Pancreas (tissue), 10 donors: ENCODE measurements at regions of chr14 and their contacts with region 1.

Region 1: DNA sequence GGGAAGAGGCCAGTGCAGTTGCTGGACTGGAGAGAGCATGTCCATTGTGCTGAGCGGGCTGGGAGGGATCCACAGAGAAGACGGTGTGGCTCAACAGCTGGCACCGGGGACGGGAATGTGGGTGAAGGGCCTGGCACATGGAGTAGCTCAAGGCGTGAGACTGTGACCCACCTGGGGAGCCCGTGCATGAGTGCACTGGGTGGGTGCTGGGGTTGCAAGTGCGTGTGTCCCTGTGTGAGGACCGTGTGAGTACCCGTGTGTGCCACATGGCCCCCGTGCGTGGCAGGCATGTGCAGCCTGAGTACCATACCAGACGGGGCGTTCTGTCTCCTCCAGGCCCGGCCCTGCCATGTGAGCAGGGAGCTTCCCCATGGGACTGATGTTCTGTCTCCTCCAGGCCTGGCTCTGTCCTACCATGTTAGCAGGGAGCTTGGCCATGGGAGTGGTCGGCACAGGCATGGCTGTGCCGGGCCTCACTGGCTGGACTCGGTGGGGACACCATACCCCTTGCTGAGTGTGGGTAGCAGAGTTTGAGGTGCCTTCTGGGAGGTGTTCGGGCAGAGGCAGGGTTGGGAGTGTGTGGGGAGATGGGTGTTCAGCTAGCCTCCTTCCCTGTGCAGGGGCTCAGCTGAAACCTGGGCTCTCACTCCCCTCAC is 234.4 kb downstream of the TMEM121 start:
- DNase-seq: peak in 1 of 6 donors; percentile 39
- ATAC-seq: no peak
- H3K4me3 ChIP-seq: no peak overlapping the region
- H3K27ac ChIP-seq: no peak overlapping the region
- H3K4me1 ChIP-seq: no peaks in the 10 kb centered on the region
- H3K27me3 ChIP-seq: no peaks in the 10 kb centered on the region
- CTCF ChIP-seq: no peak

Region 2: GRCh38 chr14:105617201-105617777 is 143.5 kb before region 1 on chr14:
- intact Hi-C with region 1: loop called in 2 of 3 experiments (anchors 2 to 5 kb)
- DNase-seq: peak in 1 of 6 donors; percentile 42
- ATAC-seq: peak in 1 of 4 donors; percentile 11
- H3K4me3 ChIP-seq: no peak overlapping the region
- H3K27ac ChIP-seq: no peak overlapping the region
- H3K4me1 ChIP-seq: no peaks in the 10 kb centered on the region
- H3K27me3 ChIP-seq: no peaks in the 10 kb centered on the region
- CTCF ChIP-seq: no peak

Region 3: DNA sequence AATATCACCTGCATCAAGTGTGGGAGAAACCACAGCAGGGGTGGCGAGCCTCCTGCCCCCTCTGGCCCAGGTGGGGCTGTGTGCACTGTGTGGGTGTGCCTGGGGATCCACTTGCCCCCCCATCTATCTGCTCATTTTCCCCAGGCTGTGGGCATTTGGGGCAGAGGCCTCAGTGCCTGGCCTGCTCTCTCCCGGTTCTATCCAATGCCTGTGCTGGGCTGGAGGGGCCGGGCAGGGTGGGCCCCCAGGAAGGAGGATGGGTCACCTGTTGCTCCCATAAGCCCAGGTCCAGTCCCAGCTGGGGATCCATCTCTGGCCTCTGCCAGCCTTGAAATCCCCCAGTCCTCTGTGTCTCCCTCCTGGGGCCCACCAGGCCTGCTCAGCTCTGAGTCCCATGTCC is 128.8 kb before region 1 on chr14:
- intact Hi-C with region 1: no loop called
- DNase-seq: no peak
- ATAC-seq: no peak
- H3K4me3 ChIP-seq: no peak overlapping the region
- H3K27ac ChIP-seq: no peak overlapping the region
- H3K4me1 ChIP-seq: no peaks in the 10 kb centered on the region
- H3K27me3 ChIP-seq: no peaks in the 10 kb centered on the region
- CTCF ChIP-seq: no peak

Region 4: GRCh38 chr14:105952222-105952621 is 191.4 kb after region 1 on chr14:
- intact Hi-C with region 1: no loop called
- DNase-seq: no peak
- ATAC-seq: no peak
- H3K4me3 ChIP-seq: no peak overlapping the region
- H3K27ac ChIP-seq: no peak overlapping the region
- H3K4me1 ChIP-seq: no peaks in the 10 kb centered on the region
- H3K27me3 ChIP-seq: no peaks in the 10 kb centered on the region
- CTCF ChIP-seq: no peak